CD8-positive, alpha-beta T cell (primary cell): ENCODE measurements at regions of chr11 and their contacts with region 1.

Region 1: GRCh38 chr11:6443269-6444003 is 2.6 kb upstream of the HPX start:
- DNase-seq: peak; percentile 22 to 79 (median 60)
- ATAC-seq: peak; percentile 94
- H3K4me3 ChIP-seq: no peak overlapping the region
- H3K4me3 Mint-ChIP-seq: no peak overlapping the region
- H3K27ac ChIP-seq: no peak overlapping the region
- H3K27ac Mint-ChIP-seq: no peak overlapping the region
- H3K4me1 ChIP-seq: peaks cover 21% of the 10 kb centered on the region
- H3K4me1 Mint-ChIP-seq: no peaks in the 10 kb centered on the region
- H3K27me3 ChIP-seq: no peaks in the 10 kb centered on the region
- H3K27me3 Mint-ChIP-seq: no peaks in the 10 kb centered on the region
- CTCF ChIP-seq: peak; percentile 82

Region 2: GRCh38 chr11:6129635-6130034 is 313.8 kb before region 1 on chr11:
- CTCF ChIA-PET with region 1: no interaction called
- POLR2A ChIA-PET with region 1: no interaction called
- intact Hi-C with region 1: no loop called
- DNase-seq: no peak
- ATAC-seq: no peak
- H3K4me3 ChIP-seq: no peak overlapping the region
- H3K4me3 Mint-ChIP-seq: no peak overlapping the region
- H3K27ac ChIP-seq: no peak overlapping the region
- H3K27ac Mint-ChIP-seq: no peak overlapping the region
- H3K4me1 ChIP-seq: no peaks in the 10 kb centered on the region
- H3K4me1 Mint-ChIP-seq: no peaks in the 10 kb centered on the region
- H3K27me3 ChIP-seq: no peaks in the 10 kb centered on the region
- H3K27me3 Mint-ChIP-seq: peaks cover 10% of the 10 kb centered on the region
- CTCF ChIP-seq: no peak

Region 3: DNA sequence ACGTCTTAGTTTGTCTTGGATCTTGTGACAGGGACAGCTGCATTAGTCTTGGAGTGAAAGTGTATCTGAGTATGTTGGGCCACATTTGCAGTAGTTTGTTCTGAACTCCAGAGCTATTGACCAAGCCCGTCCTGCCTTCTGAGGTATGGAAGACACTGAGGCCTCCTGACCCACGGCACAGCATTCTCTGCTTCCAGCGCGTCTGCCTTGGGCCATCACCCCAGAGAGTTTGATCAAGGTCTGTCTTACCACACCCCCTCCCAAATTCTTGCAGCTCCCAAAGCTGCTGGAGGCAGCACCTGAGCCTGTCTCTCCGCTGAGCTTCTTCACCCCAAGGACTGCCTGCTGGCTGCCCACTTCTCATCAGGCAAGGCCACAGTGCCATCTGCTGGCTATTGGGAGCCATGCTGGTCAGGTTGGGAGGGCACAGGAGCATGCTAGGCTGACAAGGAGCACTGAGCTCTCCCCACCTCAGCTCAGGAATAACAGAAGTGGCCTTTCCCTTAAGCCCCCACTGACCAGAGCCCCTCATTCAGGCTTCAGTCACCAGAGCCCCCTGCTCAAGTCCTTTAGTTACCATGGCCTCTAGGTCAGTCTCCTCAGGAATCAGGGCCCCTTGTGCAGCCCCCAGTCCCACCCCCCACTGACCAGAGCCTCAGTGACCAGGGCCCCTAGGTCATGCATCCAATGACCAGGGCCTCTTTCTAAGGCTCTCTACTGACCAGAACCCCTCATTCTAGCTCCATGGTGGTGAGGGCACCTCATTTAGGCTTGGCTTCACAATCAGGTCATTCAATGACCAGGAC is 80.4 kb before region 1 on chr11:
- CTCF ChIA-PET with region 1: interaction called, 38 read pairs
- POLR2A ChIA-PET with region 1: no interaction called
- intact Hi-C with region 1: no loop called
- DNase-seq: peak; percentile 41 to 74 (median 64)
- ATAC-seq: peak; percentile 93
- H3K4me3 ChIP-seq: no peak overlapping the region
- H3K4me3 Mint-ChIP-seq: no peak overlapping the region
- H3K27ac ChIP-seq: no peak overlapping the region
- H3K27ac Mint-ChIP-seq: no peak overlapping the region
- H3K4me1 ChIP-seq: no peaks in the 10 kb centered on the region
- H3K4me1 Mint-ChIP-seq: no peaks in the 10 kb centered on the region
- H3K27me3 ChIP-seq: no peaks in the 10 kb centered on the region
- H3K27me3 Mint-ChIP-seq: no peaks in the 10 kb centered on the region
- CTCF ChIP-seq: peak; percentile 53

Region 4: DNA sequence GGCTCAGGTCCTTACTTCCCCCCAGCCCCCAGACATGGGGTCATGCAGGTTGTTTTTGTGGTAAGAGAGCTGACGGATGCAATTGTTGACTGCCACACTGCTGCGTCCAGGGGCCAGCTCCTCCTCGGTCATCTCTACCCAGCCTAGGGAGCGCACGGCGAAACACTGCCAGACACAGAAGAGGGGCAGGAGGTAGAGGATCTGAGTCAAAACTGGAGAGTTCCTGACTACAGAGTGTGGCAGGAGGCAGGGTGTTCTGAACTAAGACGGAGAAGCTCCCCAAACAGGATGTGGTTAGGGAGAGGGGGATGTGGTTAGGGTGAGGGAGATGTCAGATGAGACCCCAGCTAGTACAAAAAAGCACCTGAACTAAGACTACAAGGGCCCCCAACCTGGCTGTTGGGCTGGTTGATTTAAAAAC is 40.9 kb before region 1 on chr11:
- CTCF ChIA-PET with region 1: interaction called, 16 read pairs
- POLR2A ChIA-PET with region 1: interaction called, 13 read pairs
- intact Hi-C with region 1: no loop called
- DNase-seq: peak; percentile 46 to 95 (median 77)
- ATAC-seq: peak; percentile 76
- H3K4me3 ChIP-seq: peak overlapping the region; percentile 25 to 53
- H3K4me3 Mint-ChIP-seq: peak overlapping the region; percentile 77
- H3K27ac ChIP-seq: peak overlapping the region; percentile 77 to 84
- H3K27ac Mint-ChIP-seq: peak overlapping the region; percentile 94
- H3K4me1 ChIP-seq: peaks cover 95% of the 10 kb centered on the region
- H3K4me1 Mint-ChIP-seq: peaks cover 96% of the 10 kb centered on the region
- H3K27me3 ChIP-seq: no peaks in the 10 kb centered on the region
- H3K27me3 Mint-ChIP-seq: no peaks in the 10 kb centered on the region
- CTCF ChIP-seq: no peak

Region 5: GRCh38 chr11:6431861-6432260 is 11.6 kb before region 1 on chr11:
- CTCF ChIA-PET with region 1: interaction called, 54 read pairs
- POLR2A ChIA-PET with region 1: no interaction called
- intact Hi-C with region 1: no loop called
- DNase-seq: no peak
- ATAC-seq: no peak
- H3K4me3 ChIP-seq: no peak overlapping the region
- H3K4me3 Mint-ChIP-seq: no peak overlapping the region
- H3K27ac ChIP-seq: no peak overlapping the region
- H3K27ac Mint-ChIP-seq: no peak overlapping the region
- H3K4me1 ChIP-seq: no peaks in the 10 kb centered on the region
- H3K4me1 Mint-ChIP-seq: peaks cover 5% of the 10 kb centered on the region
- H3K27me3 ChIP-seq: no peaks in the 10 kb centered on the region
- H3K27me3 Mint-ChIP-seq: no peaks in the 10 kb centered on the region
- CTCF ChIP-seq: no peak

Region 6: GRCh38 chr11:6481012-6481923 is 37.8 kb after region 1 on chr11 and contains the starts of genes ARFIP2 and TIMM10B:
- CTCF ChIA-PET with region 1: interaction called, 11 read pairs
- POLR2A ChIA-PET with region 1: no interaction called
- intact Hi-C with region 1: no loop called
- DNase-seq: peak; percentile 92 to 99 (median 96)
- ATAC-seq: peak; percentile 95
- H3K4me3 ChIP-seq: peak within 1 kb of the TSS; percentile 76 to 87
- H3K4me3 Mint-ChIP-seq: peak within 1 kb of the TSS; percentile 96
- H3K27ac ChIP-seq: peak within 1 kb of the TSS; percentile 87 to 98
- H3K27ac Mint-ChIP-seq: peak within 1 kb of the TSS; percentile 99
- H3K4me1 ChIP-seq: peaks cover 32% of the 10 kb centered on the region
- H3K4me1 Mint-ChIP-seq: peaks cover 40% of the 10 kb centered on the region
- H3K27me3 ChIP-seq: no peaks in the 10 kb centered on the region
- H3K27me3 Mint-ChIP-seq: no peaks in the 10 kb centered on the region
- CTCF ChIP-seq: no peak
- total RNA-seq, gene ARFIP2: 76.5 to 89.7 TPM
- total RNA-seq, gene TIMM10B: 68.6 to 73.0 TPM